GM12878 (cell line): ENCODE measurements at regions of chr19 and their contacts with region 1.

Region 1: DNA sequence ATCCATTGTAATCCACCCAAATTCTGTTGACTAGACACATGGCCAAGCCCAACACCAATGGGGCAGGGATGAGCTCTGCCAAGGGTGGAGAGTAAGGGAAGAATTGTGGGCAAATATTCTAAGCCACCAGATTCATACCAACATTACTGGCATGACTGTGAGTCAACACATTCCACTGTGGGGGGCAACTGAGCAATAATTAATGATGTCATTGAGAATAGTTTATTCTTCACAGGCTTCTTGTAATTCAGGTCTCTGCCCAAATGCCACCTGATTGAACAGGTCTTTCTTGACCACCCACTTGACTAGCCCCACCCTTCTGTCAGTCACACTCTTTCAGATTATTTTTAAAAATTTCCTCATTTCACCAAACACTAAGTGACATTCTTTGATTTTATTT is 28.5 kb downstream of the ZNF283 start:
- DNase-seq: no peak
- ATAC-seq: no peak
- H3K4me3 ChIP-seq: no peak overlapping the region
- H3K27ac ChIP-seq: no peak overlapping the region
- H3K4me1 ChIP-seq: no peaks in the 10 kb centered on the region
- H3K27me3 ChIP-seq: no peaks in the 10 kb centered on the region
- CTCF ChIP-seq: no peak
- EP300 ChIP-seq: no peak
- POLR2A ChIP-seq: no peak
- RAD21 ChIP-seq: no peak

Region 2: DNA sequence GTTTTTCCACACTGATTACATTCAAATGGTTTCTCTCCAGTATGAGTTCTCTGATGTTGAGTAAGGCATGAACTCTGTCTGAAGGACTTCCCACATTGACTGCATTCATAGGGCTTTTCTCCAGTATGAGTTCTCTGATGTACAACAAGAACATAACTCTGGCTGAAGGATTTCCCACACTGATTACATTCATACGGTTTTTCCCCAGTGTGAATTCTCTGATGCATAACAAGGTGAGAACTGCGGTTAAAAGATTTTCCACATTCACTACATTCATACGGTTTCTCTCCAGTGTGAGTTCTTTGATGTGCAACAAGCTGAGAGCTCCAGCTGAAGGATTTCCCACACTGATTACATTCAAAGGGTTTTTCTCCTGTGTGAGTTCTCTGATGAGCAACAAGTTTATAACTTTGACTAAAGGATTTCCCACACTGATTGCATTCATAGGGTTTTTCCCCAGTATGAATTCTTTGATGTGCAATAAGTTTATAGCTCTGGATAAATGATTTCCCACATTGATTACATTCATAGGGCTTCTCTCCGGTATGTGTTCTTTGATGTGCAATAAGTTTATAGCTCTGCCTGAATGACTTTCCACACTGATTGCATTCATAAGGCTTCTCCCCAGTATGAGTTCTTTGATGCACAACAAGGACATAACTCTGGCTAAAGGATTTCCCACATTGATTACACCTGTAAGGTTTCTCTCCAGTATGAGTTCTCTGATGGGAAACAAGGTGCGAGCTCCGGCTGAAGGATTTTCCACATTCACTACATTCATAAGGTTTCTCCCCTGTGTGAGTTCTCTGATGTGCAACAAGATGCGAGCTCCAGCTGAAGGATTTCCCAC is 621.2 kb after region 1 on chr19:
- CTCF ChIA-PET with region 1: no interaction called
- POLR2A ChIA-PET with region 1: no interaction called
- RAD21 ChIA-PET with region 1: no interaction called
- SMC1A ChIA-PET with region 1: no interaction called
- in situ Hi-C with region 1: loop called (anchors 10 kb)
- intact Hi-C with region 1: no loop called
- DNase-seq: no peak
- ATAC-seq: no peak
- H3K4me3 ChIP-seq: no peak overlapping the region
- H3K27ac ChIP-seq: no peak overlapping the region
- H3K4me1 ChIP-seq: no peaks in the 10 kb centered on the region
- H3K27me3 ChIP-seq: no peaks in the 10 kb centered on the region
- CTCF ChIP-seq: no peak
- EP300 ChIP-seq: no peak
- POLR2A ChIP-seq: no peak
- RAD21 ChIP-seq: no peak